ENCODE measurements at regions of chr9 and their contacts with region 1.

Region 1: GRCh38 chr9:33415501-33416038 is 13.2 kb upstream of the AQP7 start:
- DNase-seq: peak; percentile 82 to 94 (median 89)
- H3K4me3 ChIP-seq: peak overlapping the region; percentile 26
- H3K4me3 Mint-ChIP-seq: peak overlapping the region; percentile 36 to 84 (median 66)
- H3K27ac ChIP-seq: no peak overlapping the region
- H3K27ac Mint-ChIP-seq: peak overlapping the region; percentile 79 to 98 (median 95)
- H3K4me1 ChIP-seq: peaks cover 41% of the 10 kb centered on the region
- H3K4me1 Mint-ChIP-seq: peaks cover 42 to 54% (median 53%) of the 10 kb centered on the region in 3 donors
- H3K27me3 ChIP-seq: no peaks in the 10 kb centered on the region
- H3K27me3 Mint-ChIP-seq: no peaks in the 10 kb centered on the region

Region 2: GRCh38 chr9:33404788-33405362 is 10.7 kb before region 1 on chr9:
- CTCF ChIA-PET with region 1: interaction called, 39 read pairs
- POLR2A ChIA-PET with region 1: interaction called, 3 read pairs
- DNase-seq: no peak
- H3K4me3 ChIP-seq: no peak overlapping the region
- H3K4me3 Mint-ChIP-seq: no peak overlapping the region
- H3K27ac ChIP-seq: no peak overlapping the region
- H3K27ac Mint-ChIP-seq: peak overlapping the region in 4 of 8 donors; percentile 40 to 76 (median 51)
- H3K4me1 ChIP-seq: no peaks in the 10 kb centered on the region
- H3K4me1 Mint-ChIP-seq: no peaks in the 10 kb centered on the region
- H3K27me3 ChIP-seq: no peaks in the 10 kb centered on the region
- H3K27me3 Mint-ChIP-seq: peaks cover 0 to 4% of the 10 kb centered on the region in 2 donors

Region 3: DNA sequence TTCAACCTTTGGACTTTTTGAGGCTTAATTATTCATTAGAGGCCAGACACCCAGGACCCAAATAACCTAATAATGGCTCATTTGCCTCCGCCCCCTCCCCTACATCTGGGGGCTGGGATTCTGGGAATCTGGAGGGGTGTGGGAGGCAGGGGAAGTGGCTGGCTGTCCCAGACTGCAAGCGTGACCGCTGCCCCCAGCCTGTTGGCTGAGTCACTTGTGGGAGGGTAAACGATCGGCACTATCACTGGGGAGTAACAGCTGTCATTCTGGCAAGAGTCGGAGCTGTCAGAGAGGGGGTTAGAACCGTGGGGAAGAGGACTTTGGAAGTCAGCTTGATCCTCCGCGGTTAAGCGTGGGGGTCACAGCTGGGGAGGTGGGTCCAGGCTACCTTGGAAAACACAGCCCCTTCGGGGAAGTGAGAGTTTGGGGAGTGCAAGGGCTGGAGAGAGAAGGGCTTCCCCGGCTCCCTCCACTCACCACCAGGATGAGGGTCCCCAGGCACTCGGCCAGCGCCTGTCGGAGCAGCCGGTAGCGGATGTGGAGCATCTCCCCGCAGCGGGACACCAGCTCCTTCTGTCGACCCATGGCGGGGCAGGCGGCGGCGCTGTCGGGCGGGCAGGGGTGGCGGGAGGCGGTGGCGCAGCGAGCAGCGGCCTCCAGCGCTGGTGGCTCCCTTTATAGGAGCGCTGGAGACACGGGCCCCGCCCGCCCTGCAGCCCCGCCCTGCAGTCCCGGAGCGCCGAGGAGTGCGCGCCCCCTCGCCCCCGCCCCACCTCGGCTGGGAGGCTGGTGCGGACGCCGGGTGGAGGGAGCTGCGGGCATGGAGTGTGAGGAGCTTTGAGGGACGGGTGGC is 31.6 kb after region 1 on chr9 and contains the start of gene AQP3:
- CTCF ChIA-PET with region 1: interaction called, 102 read pairs
- POLR2A ChIA-PET with region 1: interaction called, 13 read pairs
- DNase-seq: peak; percentile 51 to 80 (median 72)
- H3K4me3 ChIP-seq: peak within 1 kb of the TSS; percentile 99
- H3K4me3 Mint-ChIP-seq: peak within 1 kb of the TSS; percentile 85 to 99 (median 88)
- H3K27ac ChIP-seq: peak within 1 kb of the TSS; percentile 86
- H3K27ac Mint-ChIP-seq: peak within 1 kb of the TSS; percentile 87 to 100 (median 97)
- H3K4me1 ChIP-seq: peaks cover 35% of the 10 kb centered on the region
- H3K4me1 Mint-ChIP-seq: peaks cover 38 to 62% (median 47%) of the 10 kb centered on the region in 3 donors
- H3K27me3 ChIP-seq: no peaks in the 10 kb centered on the region
- H3K27me3 Mint-ChIP-seq: no peaks in the 10 kb centered on the region
- total RNA-seq, gene AQP3: 8.7 to 9.3 TPM

Region 4: DNA sequence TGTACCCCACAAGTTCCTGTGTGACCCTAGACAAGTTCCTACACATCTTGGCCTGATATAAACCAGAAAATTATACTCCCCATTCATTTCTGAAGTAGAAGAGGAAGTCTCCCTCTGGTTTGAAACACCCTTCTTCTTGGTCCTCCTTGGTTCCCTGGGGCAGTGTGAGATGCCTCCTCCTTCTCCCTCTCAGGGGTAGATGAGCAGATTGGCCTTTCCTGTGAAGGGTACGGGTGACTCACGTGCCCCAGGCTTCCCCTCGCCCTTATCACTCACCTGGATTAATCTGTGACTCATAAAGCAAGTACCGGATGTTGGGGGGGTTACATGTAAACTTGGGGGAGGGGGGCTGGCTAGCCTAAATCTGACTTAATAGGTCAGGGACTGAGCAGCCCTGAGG is 42.9 kb after region 1 on chr9:
- CTCF ChIA-PET with region 1: interaction called, 105 read pairs
- POLR2A ChIA-PET with region 1: interaction called, 3 read pairs
- DNase-seq: peak; percentile 34 to 82 (median 54)
- H3K4me3 ChIP-seq: no peak overlapping the region
- H3K4me3 Mint-ChIP-seq: peak overlapping the region in 6 of 7 donors; percentile 53 to 74 (median 67)
- H3K27ac ChIP-seq: peak overlapping the region; percentile 49
- H3K27ac Mint-ChIP-seq: peak overlapping the region; percentile 83 to 98 (median 95)
- H3K4me1 ChIP-seq: peaks cover 51% of the 10 kb centered on the region
- H3K4me1 Mint-ChIP-seq: peaks cover 43 to 50% (median 44%) of the 10 kb centered on the region in 3 donors
- H3K27me3 ChIP-seq: no peaks in the 10 kb centered on the region
- H3K27me3 Mint-ChIP-seq: no peaks in the 10 kb centered on the region

Region 5: GRCh38 chr9:33473643-33474352 is 58.2 kb after region 1 on chr9 and contains the start of gene NOL6:
- CTCF ChIA-PET with region 1: interaction called, 105 read pairs
- POLR2A ChIA-PET with region 1: interaction called, 5 read pairs
- DNase-seq: peak; percentile 94 to 99 (median 98)
- H3K4me3 ChIP-seq: peak within 1 kb of the TSS; percentile 76
- H3K4me3 Mint-ChIP-seq: peak within 1 kb of the TSS; percentile 88 to 100 (median 99)
- H3K27ac ChIP-seq: peak within 1 kb of the TSS; percentile 45
- H3K27ac Mint-ChIP-seq: peak within 1 kb of the TSS; percentile 64 to 99 (median 97)
- H3K4me1 ChIP-seq: peaks cover 22% of the 10 kb centered on the region
- H3K4me1 Mint-ChIP-seq: peaks cover 26 to 32% (median 31%) of the 10 kb centered on the region in 3 donors
- H3K27me3 ChIP-seq: no peaks in the 10 kb centered on the region
- H3K27me3 Mint-ChIP-seq: no peaks in the 10 kb centered on the region
- total RNA-seq, gene NOL6: 90.8 to 93.0 TPM

Region 6: GRCh38 chr9:33719581-33720374 is 304.2 kb after region 1 on chr9:
- CTCF ChIA-PET with region 1: no interaction called
- POLR2A ChIA-PET with region 1: no interaction called
- DNase-seq: peak in 3 of 5 donors; percentile 7 to 51 (median 22)
- H3K4me3 ChIP-seq: no peak overlapping the region
- H3K4me3 Mint-ChIP-seq: peak overlapping the region in 2 of 7 donors; percentile 42 to 65
- H3K27ac ChIP-seq: no peak overlapping the region
- H3K27ac Mint-ChIP-seq: no peak overlapping the region
- H3K4me1 ChIP-seq: no peaks in the 10 kb centered on the region
- H3K4me1 Mint-ChIP-seq: peaks cover 0 to 10% (median 7%) of the 10 kb centered on the region in 3 donors
- H3K27me3 ChIP-seq: no peaks in the 10 kb centered on the region
- H3K27me3 Mint-ChIP-seq: peaks cover 7 to 14% of the 10 kb centered on the region in 2 donors